Pancreas (tissue), 10 donors: ENCODE measurements at regions of chr9 and their contacts with region 1.

Region 1: DNA sequence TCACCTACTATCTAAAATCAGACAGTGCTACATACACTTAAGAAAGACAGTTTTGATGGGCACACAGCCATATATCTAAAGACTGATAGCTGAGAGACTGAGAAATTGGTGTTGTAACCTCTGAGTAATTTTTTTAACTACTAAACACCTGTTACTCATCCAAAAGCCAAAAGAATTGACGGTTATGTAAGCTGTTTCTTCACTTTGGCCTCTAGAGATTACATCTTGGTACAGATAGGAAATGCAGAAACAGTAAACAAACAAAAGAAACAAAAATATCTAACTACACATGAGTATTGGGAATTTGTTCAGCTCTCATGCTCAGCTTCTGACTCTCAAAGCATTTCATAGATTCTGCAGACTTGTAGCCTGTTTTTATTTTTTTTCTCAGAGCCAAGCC is 152.1 kb upstream of the GAS1 start:
- DNase-seq: no peak
- ATAC-seq: no peak
- H3K4me3 ChIP-seq: no peak overlapping the region
- H3K27ac ChIP-seq: no peak overlapping the region
- H3K4me1 ChIP-seq: no peaks in the 10 kb centered on the region
- H3K27me3 ChIP-seq: no peaks in the 10 kb centered on the region
- CTCF ChIP-seq: no peak

Region 2: GRCh38 chr9:87157366-87158031 is 58.1 kb after region 1 on chr9:
- intact Hi-C with region 1: loop called in 1 of 3 experiments (anchors 10 kb)
- DNase-seq: no peak
- ATAC-seq: no peak
- H3K4me3 ChIP-seq: no peak overlapping the region
- H3K27ac ChIP-seq: no peak overlapping the region
- H3K4me1 ChIP-seq: no peaks in the 10 kb centered on the region
- H3K27me3 ChIP-seq: no peaks in the 10 kb centered on the region
- CTCF ChIP-seq: no peak